SK-N-SH (cell line): ENCODE measurements at regions of chr9 and their contacts with region 1.

Region 1: DNA sequence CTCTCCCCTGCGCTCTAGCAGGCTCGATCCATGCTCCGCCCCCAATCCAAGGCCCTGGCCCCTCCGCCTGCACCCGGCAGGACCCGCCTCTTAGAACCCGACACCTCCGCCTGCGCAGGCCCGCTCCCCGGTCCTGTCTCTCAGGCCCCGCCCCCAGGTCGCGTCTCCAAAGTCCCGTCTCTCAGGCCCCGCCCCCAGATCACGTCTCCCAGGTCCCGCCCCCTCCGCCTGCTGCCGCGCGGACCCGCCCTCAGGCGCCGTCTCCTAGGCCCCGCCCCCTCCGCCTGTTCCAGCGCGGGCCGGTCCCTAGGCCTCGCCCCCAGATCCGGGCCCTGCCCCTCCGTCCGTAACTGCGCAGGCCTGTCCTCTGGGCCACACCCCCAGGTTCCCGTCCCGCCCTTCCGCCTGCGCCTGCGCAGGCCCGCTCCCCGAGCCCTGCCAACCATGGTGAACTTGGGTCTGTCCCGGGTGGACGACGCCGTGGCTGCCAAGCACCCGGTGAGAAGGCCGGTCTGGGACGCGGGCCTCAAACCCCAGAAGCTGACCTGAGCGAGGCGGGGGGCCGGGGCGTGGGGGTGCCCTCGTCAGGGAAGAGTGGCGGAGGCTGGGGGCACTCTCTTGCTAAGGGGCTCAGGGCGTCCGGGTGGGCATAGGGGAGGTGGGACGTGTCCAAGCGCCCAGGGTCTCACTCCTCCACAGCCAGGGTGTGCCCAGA is at the start of gene TMEM141:
- DNase-seq: peak; percentile 98
- H3K4me3 ChIP-seq: peak within 1 kb of the TSS; percentile 89 to 95
- H3K27ac ChIP-seq: peak within 1 kb of the TSS; percentile 78 to 90
- H3K4me1 ChIP-seq: peaks cover 7 to 31% of the 10 kb centered on the region in 2 experiments
- H3K27me3 ChIP-seq: no peaks in the 10 kb centered on the region
- CTCF ChIP-seq: no peak
- EP300 ChIP-seq: no peak
- RAD21 ChIP-seq: no peak
- polyA plus RNA-seq, gene TMEM141: 112 and 135 TPM in 2 replicates

Region 2: DNA sequence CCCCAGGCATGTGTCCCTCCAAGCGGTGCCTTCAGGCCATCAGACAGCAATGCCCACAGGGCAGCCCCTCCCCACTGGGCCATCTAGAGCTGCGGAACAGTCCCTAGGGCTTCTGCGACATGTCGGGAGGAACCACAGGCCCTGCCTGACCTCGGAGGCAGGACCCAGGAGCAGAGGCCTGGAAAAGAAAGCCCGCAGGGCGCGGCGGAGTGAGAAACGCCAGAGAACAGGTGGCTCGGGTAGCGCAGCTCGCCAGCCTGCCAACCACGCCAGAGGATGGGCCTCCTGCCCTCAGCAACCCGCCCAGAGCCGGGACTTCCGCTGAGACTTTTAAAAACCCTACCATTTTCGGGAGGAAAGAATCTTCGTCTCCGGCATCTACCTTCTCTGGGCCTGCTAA is 33.8 kb before region 1 on chr9:
- CTCF ChIA-PET with region 1: interaction called, 17 read pairs
- POLR2A ChIA-PET with region 1: no interaction called
- DNase-seq: no peak
- H3K4me3 ChIP-seq: no peak overlapping the region
- H3K27ac ChIP-seq: no peak overlapping the region
- H3K4me1 ChIP-seq: peaks cover 0 to 8% of the 10 kb centered on the region in 2 experiments; a peak in 1 of 4 replicates
- H3K27me3 ChIP-seq: no peaks in the 10 kb centered on the region
- CTCF ChIP-seq: no peak
- EP300 ChIP-seq: no peak
- RAD21 ChIP-seq: no peak

Region 3: DNA sequence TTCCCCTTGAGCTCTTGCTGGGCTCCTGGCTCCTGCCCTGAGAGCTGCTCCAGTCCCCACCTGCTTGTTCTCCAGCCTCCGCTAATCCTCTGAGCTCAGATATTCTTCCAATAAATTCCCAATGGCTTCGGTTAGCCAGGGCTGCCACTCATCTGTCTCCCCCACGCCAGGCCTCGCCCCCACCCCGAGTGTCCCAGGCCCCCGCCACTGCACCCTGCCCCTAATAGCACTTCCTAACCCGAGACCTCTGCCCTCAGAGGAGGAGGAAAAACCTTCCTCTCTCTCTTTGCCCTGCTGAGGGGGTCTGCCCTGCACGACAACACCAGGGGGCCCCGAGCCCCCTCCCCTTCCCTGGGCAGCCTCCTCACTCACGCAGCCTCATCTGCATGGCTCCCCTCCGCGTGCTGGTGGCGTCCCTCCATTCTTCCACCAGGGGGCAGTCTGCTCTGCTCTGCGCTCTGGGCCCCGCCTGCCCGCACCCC is 21.3 kb before region 1 on chr9:
- CTCF ChIA-PET with region 1: interaction called, 57 read pairs
- POLR2A ChIA-PET with region 1: no interaction called
- DNase-seq: peak; percentile 96
- H3K4me3 ChIP-seq: peak overlapping the region in 1 of 2 experiments; percentile 25; a peak in 1 of 4 replicates
- H3K27ac ChIP-seq: no peak overlapping the region; a peak in 1 of 4 replicates
- H3K4me1 ChIP-seq: peaks cover 0 to 3% of the 10 kb centered on the region in 2 experiments; a peak in 1 of 4 replicates
- H3K27me3 ChIP-seq: no peaks in the 10 kb centered on the region; the same call in 1 of the 2 replicates
- CTCF ChIP-seq: peak; percentile 61
- EP300 ChIP-seq: no peak
- RAD21 ChIP-seq: peak; percentile 33; the same call in 1 of the 2 replicates

Region 4: GRCh38 chr9:136807281-136808074 is 16.4 kb after region 1 on chr9 and contains the start of gene RABL6:
- CTCF ChIA-PET with region 1: interaction called, 13 read pairs
- POLR2A ChIA-PET with region 1: no interaction called
- DNase-seq: peak; percentile 99
- H3K4me3 ChIP-seq: peak within 1 kb of the TSS; percentile 79 to 96
- H3K27ac ChIP-seq: peak within 1 kb of the TSS; percentile 55 to 86; a peak in 3 of 4 replicates
- H3K4me1 ChIP-seq: peaks cover 20 to 22% of the 10 kb centered on the region in 2 experiments; a peak in 3 of 4 replicates
- H3K27me3 ChIP-seq: no peaks in the 10 kb centered on the region
- CTCF ChIP-seq: no peak
- EP300 ChIP-seq: no peak
- RAD21 ChIP-seq: no peak
- polyA plus RNA-seq, gene RABL6: 40.0 and 43.6 TPM in 2 replicates

Region 5: GRCh38 chr9:136840140-136840687 is 49.1 kb after region 1 on chr9:
- CTCF ChIA-PET with region 1: interaction called, 36 read pairs
- POLR2A ChIA-PET with region 1: no interaction called
- DNase-seq: peak; percentile 63
- H3K4me3 ChIP-seq: no peak overlapping the region
- H3K27ac ChIP-seq: peak overlapping the region in 1 of 2 experiments; percentile 11; a peak in 1 of 4 replicates
- H3K4me1 ChIP-seq: peaks cover 24 to 29% of the 10 kb centered on the region in 2 experiments; a peak in 2 of 4 replicates
- H3K27me3 ChIP-seq: no peaks in the 10 kb centered on the region
- CTCF ChIP-seq: no peak
- EP300 ChIP-seq: no peak
- RAD21 ChIP-seq: no peak

Region 6: GRCh38 chr9:137021979-137022619 is 231.0 kb after region 1 on chr9:
- CTCF ChIA-PET with region 1: interaction called, 12 read pairs
- POLR2A ChIA-PET with region 1: no interaction called
- DNase-seq: peak; percentile 90
- H3K4me3 ChIP-seq: no peak overlapping the region
- H3K27ac ChIP-seq: no peak overlapping the region
- H3K4me1 ChIP-seq: peaks cover 0 to 23% of the 10 kb centered on the region in 2 experiments; a peak in 1 of 4 replicates
- H3K27me3 ChIP-seq: no peaks in the 10 kb centered on the region
- CTCF ChIP-seq: no peak
- EP300 ChIP-seq: no peak
- RAD21 ChIP-seq: no peak